ENCODE measurements at regions of chr17 and their contacts with region 1.

Region 1: DNA sequence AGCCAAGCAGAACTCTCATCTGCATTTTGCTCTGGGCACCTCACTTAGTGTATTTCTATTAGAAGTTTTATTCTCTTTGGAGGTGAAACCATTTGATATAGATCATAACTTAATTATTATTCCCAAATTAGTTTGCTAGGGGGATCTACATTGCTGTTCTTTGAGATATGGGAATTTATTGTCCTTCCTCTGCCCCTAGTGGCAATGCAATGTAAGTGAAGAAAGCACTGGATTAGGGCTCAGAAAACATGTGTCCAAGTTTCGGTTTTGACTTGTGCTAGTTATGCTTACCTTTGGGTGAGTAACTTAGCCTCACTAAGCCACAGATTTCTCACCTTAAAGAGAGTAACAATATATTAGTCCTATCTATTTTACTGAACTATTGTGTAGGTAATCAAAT is 2.9 kb downstream of the KRT39 start:
- DNase-seq: no peak
- H3K4me3 ChIP-seq: no peak overlapping the region
- H3K27ac ChIP-seq: no peak overlapping the region
- H3K4me1 ChIP-seq: no peaks in the 10 kb centered on the region
- H3K27me3 ChIP-seq: no peaks in the 10 kb centered on the region
- CTCF ChIP-seq: peak in 2 of 3 experiments; percentile 23 to 64; a peak in 2 of 4 replicates
- EP300 ChIP-seq: no peak
- POLR2A ChIP-seq: no peak
- RAD21 ChIP-seq: peak in 1 of 2 experiments; percentile 43; a peak in 2 of 4 replicates

Region 2: DNA sequence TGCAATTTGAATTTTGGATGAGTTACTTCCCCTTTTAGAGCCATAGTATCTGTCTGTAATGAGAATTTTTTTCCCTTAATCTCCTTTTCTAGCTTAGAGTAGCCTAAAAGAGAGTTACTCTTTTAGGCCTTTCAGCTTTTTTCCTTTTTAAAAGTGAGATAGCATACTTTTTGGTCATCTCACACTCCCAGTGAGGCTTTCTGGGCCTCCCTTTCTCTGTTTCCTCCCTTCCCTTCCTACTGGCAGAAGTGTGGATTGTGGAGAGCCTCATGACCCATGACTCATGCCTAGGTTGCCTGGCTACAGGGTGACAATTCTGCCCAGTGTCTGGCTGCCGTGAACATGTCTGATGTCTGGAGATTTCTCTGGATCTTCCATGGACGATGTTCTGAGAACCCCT is 41.6 kb before region 1 on chr17:
- CTCF ChIA-PET with region 1: no interaction called
- POLR2A ChIA-PET with region 1: no interaction called
- DNase-seq: no peak
- H3K4me3 ChIP-seq: no peak overlapping the region
- H3K27ac ChIP-seq: no peak overlapping the region
- H3K4me1 ChIP-seq: no peaks in the 10 kb centered on the region
- H3K27me3 ChIP-seq: no peaks in the 10 kb centered on the region
- CTCF ChIP-seq: no peak
- EP300 ChIP-seq: no peak
- POLR2A ChIP-seq: no peak
- RAD21 ChIP-seq: no peak

Region 3: GRCh38 chr17:40945414-40945813 is 18.4 kb before region 1 on chr17:
- CTCF ChIA-PET with region 1: interaction called, 12 read pairs
- POLR2A ChIA-PET with region 1: no interaction called
- DNase-seq: no peak
- H3K4me3 ChIP-seq: no peak overlapping the region
- H3K27ac ChIP-seq: no peak overlapping the region
- H3K4me1 ChIP-seq: no peaks in the 10 kb centered on the region
- H3K27me3 ChIP-seq: no peaks in the 10 kb centered on the region
- CTCF ChIP-seq: no peak
- EP300 ChIP-seq: no peak
- POLR2A ChIP-seq: no peak
- RAD21 ChIP-seq: no peak

Region 4: DNA sequence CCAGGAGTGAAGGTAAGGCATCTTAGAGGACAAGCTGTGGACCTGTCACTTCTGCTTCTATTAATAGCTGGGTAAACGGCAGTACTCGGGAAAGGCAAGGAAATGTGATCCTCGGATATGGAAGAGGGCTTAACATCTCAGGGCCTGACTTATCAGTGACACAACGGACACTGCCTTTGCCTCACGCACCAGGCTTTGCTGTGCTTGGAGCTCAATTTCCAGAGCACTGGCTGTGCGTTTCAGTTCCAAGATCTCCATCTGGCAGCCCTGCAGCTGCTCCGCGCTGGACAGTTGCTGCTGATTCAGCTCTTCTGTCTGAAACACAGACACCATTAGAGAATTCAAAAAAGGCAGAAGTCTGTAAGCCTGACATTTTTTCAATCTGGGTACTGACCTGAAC is 16.8 kb after region 1 on chr17:
- CTCF ChIA-PET with region 1: interaction called, 34 read pairs
- POLR2A ChIA-PET with region 1: no interaction called
- DNase-seq: no peak
- H3K4me3 ChIP-seq: no peak overlapping the region
- H3K27ac ChIP-seq: no peak overlapping the region
- H3K4me1 ChIP-seq: peaks cover 3 to 8% (median 6%) of the 10 kb centered on the region in 4 experiments; a peak in 4 of 7 replicates
- H3K27me3 ChIP-seq: no peaks in the 10 kb centered on the region
- CTCF ChIP-seq: no peak
- EP300 ChIP-seq: no peak
- POLR2A ChIP-seq: no peak
- RAD21 ChIP-seq: no peak

Region 5: GRCh38 chr17:41060052-41060604 is 96.3 kb after region 1 on chr17 and contains the start of gene KRTAP2-3:
- CTCF ChIA-PET with region 1: no interaction called
- POLR2A ChIA-PET with region 1: no interaction called
- DNase-seq: no peak
- H3K4me3 ChIP-seq: no peak within 1 kb of the TSS
- H3K27ac ChIP-seq: no peak within 1 kb of the TSS
- H3K4me1 ChIP-seq: no peaks in the 10 kb centered on the region
- H3K27me3 ChIP-seq: no peaks in the 10 kb centered on the region
- CTCF ChIP-seq: no peak
- EP300 ChIP-seq: no peak
- POLR2A ChIP-seq: no peak
- RAD21 ChIP-seq: no peak
- total RNA-seq, gene KRTAP2-3: not detected in 2 replicates